Naive thymus-derived CD4-positive, alpha-beta T cell (primary cell): ENCODE measurements at regions of chrX and their contacts with region 1.

Region 1: DNA sequence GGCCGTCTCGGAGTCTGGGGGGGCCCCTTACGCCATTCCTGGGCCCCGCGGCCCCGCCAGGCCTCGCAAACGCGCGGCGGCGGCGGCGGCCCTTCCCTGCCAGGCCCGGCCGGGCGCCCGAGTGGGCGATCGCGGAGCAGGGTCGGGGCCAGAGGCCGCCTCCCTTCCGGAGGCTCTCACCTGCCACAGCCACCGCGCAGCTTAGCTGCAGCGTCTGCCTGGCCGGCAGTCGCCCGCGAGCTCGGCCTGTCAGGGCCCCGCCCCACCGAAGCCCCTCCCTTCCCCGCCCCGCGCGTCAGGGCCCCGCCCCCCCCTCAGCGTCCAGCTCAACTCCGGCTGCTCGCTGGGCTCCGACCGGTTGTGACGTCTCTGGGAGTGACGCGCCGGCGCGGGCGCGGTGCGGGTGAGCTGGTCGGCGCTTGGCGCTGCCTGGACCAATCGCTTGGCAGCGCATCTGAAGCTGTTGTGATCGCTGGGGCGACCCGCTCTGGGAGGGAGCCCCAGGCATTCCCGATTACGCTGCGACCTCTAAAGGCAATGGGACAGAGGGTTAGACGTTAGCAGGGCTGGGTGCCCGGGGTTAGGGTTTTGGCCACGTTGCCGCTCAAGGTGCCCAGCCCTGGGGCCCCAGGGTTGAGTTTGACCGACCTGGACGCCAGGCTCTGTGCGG is at the start of gene SLC10A3:
- DNase-seq: peak; percentile 70 to 87 (median 77)
- ATAC-seq: peak; percentile 93
- H3K4me3 ChIP-seq: peak within 1 kb of the TSS; percentile 74
- H3K4me3 Mint-ChIP-seq: peak within 1 kb of the TSS; percentile 78 to 92 (median 88)
- H3K27ac ChIP-seq: peak within 1 kb of the TSS; percentile 90
- H3K27ac Mint-ChIP-seq: peak within 1 kb of the TSS; percentile 81 to 96 (median 91)
- H3K4me1 ChIP-seq: peaks cover 0 to under 1% of the 10 kb centered on the region in 2 donors
- H3K4me1 Mint-ChIP-seq: peaks cover 0 to 23% (median 17%) of the 10 kb centered on the region in 7 donors
- H3K27me3 ChIP-seq: no peaks in the 10 kb centered on the region
- H3K27me3 Mint-ChIP-seq: no peaks in the 10 kb centered on the region
- total RNA-seq, gene SLC10A3: 11.7 to 22.7 (median 19.0) TPM

Region 2: DNA sequence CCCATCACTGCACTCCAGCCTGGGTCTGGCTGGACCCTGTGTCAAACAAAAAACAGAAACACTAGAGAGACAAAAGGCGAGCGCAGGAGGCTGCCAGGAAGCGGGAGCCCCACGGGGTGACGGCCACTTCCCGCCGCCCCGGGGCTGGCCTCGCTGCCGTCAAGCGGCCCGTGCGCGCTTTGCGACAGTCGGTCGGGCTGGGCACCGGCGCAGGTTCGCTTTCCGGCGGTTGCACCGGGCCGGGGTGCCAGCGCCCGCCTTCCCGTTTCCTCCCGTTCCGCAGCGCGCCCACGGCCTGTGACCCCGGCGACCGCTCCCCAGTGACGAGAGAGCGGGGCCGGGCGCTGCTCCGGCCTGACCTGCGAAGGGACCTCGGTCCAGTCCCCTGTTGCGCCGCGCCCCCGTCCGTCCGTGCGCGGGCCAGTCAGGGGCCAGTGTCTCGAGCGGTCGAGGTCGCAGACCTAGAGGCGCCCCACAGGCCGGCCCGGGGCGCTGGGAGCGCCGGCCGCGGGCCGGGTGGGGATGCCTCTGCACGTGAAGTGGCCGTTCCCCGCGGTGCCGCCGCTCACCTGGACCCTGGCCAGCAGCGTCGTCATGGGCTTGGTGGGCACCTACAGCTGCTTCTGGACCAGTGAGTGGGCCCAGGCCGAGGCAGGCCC is 79.1 kb before region 1 on chrX and contains the start of gene TAFAZZIN:
- CTCF ChIA-PET with region 1: interaction called, 3 read pairs
- POLR2A ChIA-PET with region 1: interaction called, 15 read pairs
- intact Hi-C with region 1: loop called (anchors 1 to 2 kb)
- DNase-seq: peak; percentile 48 to 79 (median 73)
- ATAC-seq: peak; percentile 83
- H3K4me3 ChIP-seq: peak within 1 kb of the TSS; percentile 67
- H3K4me3 Mint-ChIP-seq: peak within 1 kb of the TSS; percentile 85 to 97 (median 90)
- H3K27ac ChIP-seq: peak within 1 kb of the TSS; percentile 79
- H3K27ac Mint-ChIP-seq: peak within 1 kb of the TSS; percentile 90 to 97 (median 94)
- H3K4me1 ChIP-seq: peaks cover 6 to 7% of the 10 kb centered on the region in 2 donors
- H3K4me1 Mint-ChIP-seq: peaks cover 9 to 22% (median 14%) of the 10 kb centered on the region in 7 donors
- H3K27me3 ChIP-seq: no peaks in the 10 kb centered on the region
- H3K27me3 Mint-ChIP-seq: no peaks in the 10 kb centered on the region
- total RNA-seq, gene TAFAZZIN: 90.9 to 130 (median 108) TPM

Region 3: GRCh38 chrX:154428176-154429010 is 62.2 kb before region 1 on chrX and contains the start of gene ATP6AP1:
- CTCF ChIA-PET with region 1: interaction called, 3 read pairs
- POLR2A ChIA-PET with region 1: interaction called, 13 read pairs
- intact Hi-C with region 1: no loop called
- DNase-seq: peak; percentile 72 to 90 (median 85)
- ATAC-seq: peak; percentile 98
- H3K4me3 ChIP-seq: peak within 1 kb of the TSS; percentile 55
- H3K4me3 Mint-ChIP-seq: peak within 1 kb of the TSS; percentile 77 to 86 (median 82)
- H3K27ac ChIP-seq: peak within 1 kb of the TSS; percentile 81
- H3K27ac Mint-ChIP-seq: peak within 1 kb of the TSS; percentile 76 to 91 (median 82)
- H3K4me1 ChIP-seq: peaks cover 0 to 4% of the 10 kb centered on the region in 2 donors
- H3K4me1 Mint-ChIP-seq: peaks cover 7 to 40% (median 25%) of the 10 kb centered on the region in 7 donors
- H3K27me3 ChIP-seq: no peaks in the 10 kb centered on the region
- H3K27me3 Mint-ChIP-seq: no peaks in the 10 kb centered on the region
- total RNA-seq, gene ATP6AP1: 37.8 to 63.3 (median 51.1) TPM

Region 4: GRCh38 chrX:154436983-154437719 is 53.4 kb before region 1 on chrX and contains the start of gene GDI1:
- CTCF ChIA-PET with region 1: no interaction called
- POLR2A ChIA-PET with region 1: interaction called, 4 read pairs
- intact Hi-C with region 1: loop called in 1 of 2 experiments (anchors 2 kb)
- DNase-seq: peak; percentile 39 to 72 (median 62)
- ATAC-seq: peak; percentile 82
- H3K4me3 ChIP-seq: peak within 1 kb of the TSS; percentile 48
- H3K4me3 Mint-ChIP-seq: peak within 1 kb of the TSS; percentile 75 to 90 (median 86)
- H3K27ac ChIP-seq: peak within 1 kb of the TSS; percentile 85
- H3K27ac Mint-ChIP-seq: peak within 1 kb of the TSS; percentile 82 to 97 (median 91)
- H3K4me1 ChIP-seq: no peaks in the 10 kb centered on the region
- H3K4me1 Mint-ChIP-seq: peaks cover 0 to 36% (median 17%) of the 10 kb centered on the region in 7 donors
- H3K27me3 ChIP-seq: no peaks in the 10 kb centered on the region
- H3K27me3 Mint-ChIP-seq: no peaks in the 10 kb centered on the region
- total RNA-seq, gene GDI1: 106 to 174 (median 140) TPM

Region 5: DNA sequence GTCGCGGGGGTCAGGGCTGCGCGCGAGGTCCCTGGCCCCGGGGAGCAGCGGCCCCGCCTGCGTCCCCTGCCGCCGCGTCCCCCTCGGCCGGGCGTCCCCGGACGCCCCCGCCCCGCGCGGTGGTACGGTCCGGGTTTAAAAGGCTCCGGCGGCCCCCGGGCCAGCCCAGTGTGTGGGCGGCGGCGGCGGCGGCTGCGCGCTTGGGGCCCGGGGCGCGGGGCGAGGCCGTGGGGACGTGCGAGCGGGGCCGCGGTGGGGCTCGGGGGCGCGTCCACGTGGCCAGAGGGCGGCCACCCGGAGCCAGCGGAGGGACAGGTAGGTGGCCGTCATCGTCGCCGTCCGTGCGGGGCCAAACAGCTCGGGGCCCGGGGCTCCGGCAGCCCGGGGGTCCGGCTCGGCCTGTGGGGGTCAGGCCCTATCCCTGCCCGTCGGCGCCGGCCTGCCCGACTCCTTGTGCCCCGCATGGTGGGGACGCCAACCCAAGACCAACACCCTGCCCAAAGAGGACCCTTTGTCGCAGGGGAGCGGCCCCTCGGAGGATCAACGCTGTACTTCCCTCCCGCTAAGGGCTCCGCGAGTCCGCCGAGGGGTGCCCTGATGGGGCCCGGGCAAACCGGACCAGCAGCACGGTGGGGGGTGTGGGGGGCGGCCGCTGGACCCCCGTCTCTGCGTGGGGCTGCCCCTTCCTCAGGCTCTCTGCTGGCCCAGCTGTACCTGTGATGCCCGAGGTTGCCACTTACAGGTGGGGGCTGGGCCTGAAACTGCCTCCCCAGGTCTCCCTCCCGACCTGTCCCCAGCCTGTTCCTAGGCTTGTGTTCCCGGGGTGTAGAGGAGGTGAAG is 32.2 kb before region 1 on chrX and contains the start of gene PLXNA3:
- CTCF ChIA-PET with region 1: no interaction called
- POLR2A ChIA-PET with region 1: interaction called, 16 read pairs
- intact Hi-C with region 1: loop called in 1 of 2 experiments (anchors 1 kb)
- DNase-seq: peak; percentile 40 to 74 (median 68)
- ATAC-seq: peak; percentile 90
- H3K4me3 ChIP-seq: peak within 1 kb of the TSS; percentile 45
- H3K4me3 Mint-ChIP-seq: peak within 1 kb of the TSS; percentile 79 to 97 (median 94)
- H3K27ac ChIP-seq: peak within 1 kb of the TSS; percentile 70
- H3K27ac Mint-ChIP-seq: peak within 1 kb of the TSS; percentile 86 to 98 (median 94)
- H3K4me1 ChIP-seq: peaks cover 0 to 3% of the 10 kb centered on the region in 2 donors
- H3K4me1 Mint-ChIP-seq: peaks cover 4 to 16% (median 9%) of the 10 kb centered on the region in 7 donors
- H3K27me3 ChIP-seq: no peaks in the 10 kb centered on the region
- H3K27me3 Mint-ChIP-seq: no peaks in the 10 kb centered on the region
- total RNA-seq, gene PLXNA3: 32.9 to 45.7 (median 43.3) TPM

Region 6: DNA sequence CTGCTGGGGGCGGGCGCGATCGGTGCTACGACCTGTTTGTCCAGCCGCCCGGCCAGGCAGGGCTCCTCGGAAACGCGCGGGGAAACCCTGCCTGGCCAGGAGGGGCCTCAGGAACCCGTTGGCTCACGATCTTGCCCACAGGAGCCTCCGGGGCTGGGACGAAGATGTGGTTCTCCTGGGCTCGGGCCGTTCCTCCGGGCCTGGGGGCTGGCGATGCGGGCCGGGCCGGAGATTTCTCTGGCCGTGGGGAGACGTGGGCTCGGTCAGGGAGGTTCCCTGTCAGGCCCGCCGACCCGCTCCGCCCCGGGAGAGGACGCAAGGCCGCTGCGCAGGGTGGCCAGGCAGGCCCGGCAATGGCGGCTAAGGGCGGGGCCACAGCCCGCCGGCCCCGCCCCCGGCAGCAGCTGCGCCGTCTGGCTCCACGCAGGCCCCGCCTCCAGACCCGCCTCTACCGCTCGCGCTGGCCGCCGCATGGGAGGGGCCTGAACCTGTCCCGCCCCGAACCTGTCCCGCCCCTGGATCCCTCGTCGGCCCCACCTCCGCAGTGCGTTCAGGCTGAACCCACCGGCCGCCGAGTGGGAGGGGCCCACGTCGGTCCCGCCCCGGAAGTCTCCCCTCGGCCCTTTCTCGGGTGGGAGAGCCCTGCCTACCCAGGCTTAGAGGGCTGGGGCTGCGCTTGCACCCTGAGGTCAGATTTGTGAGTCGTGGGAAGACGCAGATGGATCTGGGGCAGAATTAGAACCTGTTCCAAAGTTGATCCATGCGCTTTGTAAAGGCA is 25.5 kb after region 1 on chrX and contains the start of gene FAM3A:
- CTCF ChIA-PET with region 1: interaction called, 6 read pairs
- POLR2A ChIA-PET with region 1: interaction called, 69 read pairs
- intact Hi-C with region 1: loop called (anchors 1 kb)
- DNase-seq: peak; percentile 85 to 91 (median 88)
- ATAC-seq: peak; percentile 99
- H3K4me3 ChIP-seq: peak within 1 kb of the TSS; percentile 62
- H3K4me3 Mint-ChIP-seq: peak within 1 kb of the TSS; percentile 79 to 93 (median 86)
- H3K27ac ChIP-seq: peak within 1 kb of the TSS; percentile 93
- H3K27ac Mint-ChIP-seq: peak within 1 kb of the TSS; percentile 56 to 95 (median 90)
- H3K4me1 ChIP-seq: peaks cover 6 to 12% of the 10 kb centered on the region in 2 donors
- H3K4me1 Mint-ChIP-seq: peaks cover 13 to 34% (median 27%) of the 10 kb centered on the region in 7 donors
- H3K27me3 ChIP-seq: no peaks in the 10 kb centered on the region
- H3K27me3 Mint-ChIP-seq: no peaks in the 10 kb centered on the region
- total RNA-seq, gene FAM3A: 37.6 to 63.7 (median 50.9) TPM